Activated naive CD4-positive, alpha-beta T cell treated with anti-CD3 and anti-CD28 coated beads for 36 hours (primary cell): ENCODE measurements at regions of chr1 and their contacts with region 1.

Region 1: GRCh38 chr1:23344111-23344986 is at the start of gene HNRNPR:
- DNase-seq: peak; percentile 100
- H3K4me3 Mint-ChIP-seq: peak within 1 kb of the TSS; percentile 83
- H3K27ac Mint-ChIP-seq: peak within 1 kb of the TSS; percentile 93
- H3K4me1 Mint-ChIP-seq: peaks cover 32% of the 10 kb centered on the region
- H3K27me3 Mint-ChIP-seq: no peaks in the 10 kb centered on the region
- total RNA-seq, gene HNRNPR: 203 to 208 TPM

Region 2: GRCh38 chr1:23081376-23081775 is 263.0 kb before region 1 on chr1:
- CTCF ChIA-PET with region 1: no interaction called
- intact Hi-C with region 1: no loop called
- DNase-seq: no peak
- H3K4me3 Mint-ChIP-seq: no peak overlapping the region
- H3K27ac Mint-ChIP-seq: no peak overlapping the region
- H3K4me1 Mint-ChIP-seq: no peaks in the 10 kb centered on the region
- H3K27me3 Mint-ChIP-seq: no peaks in the 10 kb centered on the region

Region 3: GRCh38 chr1:23403735-23404486 is 59.6 kb after region 1 on chr1:
- CTCF ChIA-PET with region 1: interaction called, 10 read pairs
- intact Hi-C with region 1: loop called (anchors 1 kb)
- DNase-seq: peak; percentile 94
- H3K4me3 Mint-ChIP-seq: no peak overlapping the region
- H3K27ac Mint-ChIP-seq: no peak overlapping the region
- H3K4me1 Mint-ChIP-seq: peaks cover 11% of the 10 kb centered on the region
- H3K27me3 Mint-ChIP-seq: no peaks in the 10 kb centered on the region

Region 4: GRCh38 chr1:23530747-23531561 is 186.6 kb after region 1 on chr1 and contains the start of gene E2F2:
- CTCF ChIA-PET with region 1: no interaction called
- intact Hi-C with region 1: loop called (anchors 2 kb)
- DNase-seq: peak; percentile 87
- H3K4me3 Mint-ChIP-seq: peak within 1 kb of the TSS; percentile 91
- H3K27ac Mint-ChIP-seq: peak within 1 kb of the TSS; percentile 95
- H3K4me1 Mint-ChIP-seq: peaks cover 56% of the 10 kb centered on the region
- H3K27me3 Mint-ChIP-seq: peaks cover 2% of the 10 kb centered on the region
- total RNA-seq, gene E2F2: 31.3 to 33.8 TPM

Region 5: GRCh38 chr1:23691499-23692307 is 347.4 kb after region 1 on chr1 and contains the start of gene RPL11:
- CTCF ChIA-PET with region 1: no interaction called
- intact Hi-C with region 1: loop called (anchors 2 kb)
- DNase-seq: peak; percentile 93
- H3K4me3 Mint-ChIP-seq: peak within 1 kb of the TSS; percentile 95
- H3K27ac Mint-ChIP-seq: peak within 1 kb of the TSS; percentile 97
- H3K4me1 Mint-ChIP-seq: peaks cover 43% of the 10 kb centered on the region
- H3K27me3 Mint-ChIP-seq: peaks cover under 1% of the 10 kb centered on the region
- total RNA-seq, gene RPL11: 1,701 to 1,742 TPM